PC-9 (cell line): ENCODE measurements at regions of chr1 and their contacts with region 1.

Region 1: DNA sequence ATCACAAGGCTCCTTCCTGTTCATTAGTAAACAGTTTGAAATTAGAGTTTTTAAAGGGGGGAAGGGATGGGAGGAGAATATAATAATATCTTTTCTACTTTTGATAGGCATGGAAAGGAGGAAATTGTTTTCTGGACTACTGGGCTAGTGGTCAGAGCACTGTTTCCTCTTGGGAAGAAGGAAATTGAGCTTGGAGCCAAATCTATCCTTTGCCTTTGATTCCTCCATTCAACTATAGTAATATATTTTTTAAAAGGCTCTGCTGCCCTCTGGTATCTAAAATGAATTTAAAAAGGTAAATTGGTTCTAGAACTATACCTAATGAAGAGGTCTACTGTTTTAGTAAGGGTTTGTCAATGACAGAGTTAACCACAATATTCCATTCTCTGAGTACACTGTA is 5.9 kb downstream of the IARS2 start:
- DNase-seq: no peak
- H3K4me3 ChIP-seq: no peak overlapping the region
- H3K27ac ChIP-seq: no peak overlapping the region
- H3K4me1 ChIP-seq: peaks cover 7% of the 10 kb centered on the region
- H3K27me3 ChIP-seq: no peaks in the 10 kb centered on the region
- CTCF ChIP-seq: no peak

Region 2: GRCh38 chr1:219459351-219460080 is 640.3 kb before region 1 on chr1:
- CTCF ChIA-PET with region 1: no interaction called
- POLR2A ChIA-PET with region 1: interaction called, 12 read pairs
- intact Hi-C with region 1: no loop called
- DNase-seq: no peak
- H3K4me3 ChIP-seq: no peak overlapping the region
- H3K27ac ChIP-seq: no peak overlapping the region
- H3K4me1 ChIP-seq: no peaks in the 10 kb centered on the region
- H3K27me3 ChIP-seq: no peaks in the 10 kb centered on the region
- CTCF ChIP-seq: no peak